ENCODE measurements at regions of chr1 and their contacts with region 1.

Region 1: DNA sequence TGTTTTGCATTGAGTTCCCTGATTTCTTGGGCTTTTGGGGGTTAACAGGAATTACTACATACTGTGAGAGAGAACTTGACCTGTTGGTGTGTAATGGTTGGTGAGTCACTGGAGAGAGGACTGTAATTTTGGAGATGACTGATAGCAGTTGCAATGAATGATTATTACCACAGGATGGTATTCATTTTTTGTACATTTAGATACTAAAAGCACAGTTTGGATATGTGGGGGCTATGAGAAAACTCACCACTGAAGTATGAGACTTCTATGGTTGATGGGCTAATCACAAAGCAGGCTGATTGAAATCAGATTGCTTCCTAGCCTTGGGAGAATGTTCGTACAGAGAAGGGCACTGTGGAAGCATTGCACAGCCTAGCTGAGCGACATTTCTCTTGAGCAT is 1571.3 kb upstream of the PRMT6 start:
- DNase-seq: no peak
- H3K4me3 Mint-ChIP-seq: no peak overlapping the region
- H3K27ac Mint-ChIP-seq: no peak overlapping the region
- H3K4me1 Mint-ChIP-seq: no peaks in the 10 kb centered on the region
- H3K27me3 Mint-ChIP-seq: no peaks in the 10 kb centered on the region

Region 2: GRCh38 chr1:105467549-105467948 is 17.7 kb before region 1 on chr1:
- CTCF ChIA-PET with region 1: no interaction called
- POLR2A ChIA-PET with region 1: no interaction called
- intact Hi-C with region 1: loop called (anchors 1 kb)
- DNase-seq: no peak
- H3K4me3 Mint-ChIP-seq: no peak overlapping the region
- H3K27ac Mint-ChIP-seq: no peak overlapping the region
- H3K4me1 Mint-ChIP-seq: no peaks in the 10 kb centered on the region
- H3K27me3 Mint-ChIP-seq: no peaks in the 10 kb centered on the region

Measured in activated CD4-positive, alpha-beta memory T cell treated with anti-CD3 and anti-CD28 coated beads for 36 hours (primary cell).